ENCODE measurements at regions of chr1 and their contacts with region 1.

Region 1: GRCh38 chr1:161427733-161428516 is 60.2 kb upstream of the CFAP126 start:
- H3K4me3 ChIP-seq: peak overlapping the region; percentile 47
- H3K27ac ChIP-seq: no peak overlapping the region
- H3K4me1 ChIP-seq: no peaks in the 10 kb centered on the region
- CTCF ChIP-seq: no peak

Region 2: GRCh38 chr1:161192476-161193465 is 235.2 kb before region 1 on chr1:
- CTCF ChIA-PET with region 1: no interaction called
- POLR2A ChIA-PET with region 1: no interaction called
- H3K4me3 ChIP-seq: no peak overlapping the region
- H3K27ac ChIP-seq: no peak overlapping the region
- H3K4me1 ChIP-seq: no peaks in the 10 kb centered on the region
- CTCF ChIP-seq: peak; percentile 71

Region 3: GRCh38 chr1:161314201-161314981 is 113.5 kb before region 1 on chr1 and contains the start of gene SDHC:
- CTCF ChIA-PET with region 1: no interaction called
- POLR2A ChIA-PET with region 1: no interaction called
- H3K4me3 ChIP-seq: peak within 1 kb of the TSS; percentile 92
- H3K27ac ChIP-seq: peak within 1 kb of the TSS; percentile 69
- H3K4me1 ChIP-seq: 0 out of 2 replicates have a peak, but pooled peaks cover 4% of the 10 kb centered on the region
- CTCF ChIP-seq: peak; percentile 63

Region 4: GRCh38 chr1:161440312-161440894 is 12.5 kb after region 1 on chr1:
- CTCF ChIA-PET with region 1: interaction called, 20 read pairs
- POLR2A ChIA-PET with region 1: interaction called, 12 read pairs
- H3K4me3 ChIP-seq: peak overlapping the region; percentile 56
- H3K27ac ChIP-seq: peak overlapping the region; percentile 96
- H3K4me1 ChIP-seq: no peaks in the 10 kb centered on the region
- CTCF ChIP-seq: peak; percentile 89

Region 5: DNA sequence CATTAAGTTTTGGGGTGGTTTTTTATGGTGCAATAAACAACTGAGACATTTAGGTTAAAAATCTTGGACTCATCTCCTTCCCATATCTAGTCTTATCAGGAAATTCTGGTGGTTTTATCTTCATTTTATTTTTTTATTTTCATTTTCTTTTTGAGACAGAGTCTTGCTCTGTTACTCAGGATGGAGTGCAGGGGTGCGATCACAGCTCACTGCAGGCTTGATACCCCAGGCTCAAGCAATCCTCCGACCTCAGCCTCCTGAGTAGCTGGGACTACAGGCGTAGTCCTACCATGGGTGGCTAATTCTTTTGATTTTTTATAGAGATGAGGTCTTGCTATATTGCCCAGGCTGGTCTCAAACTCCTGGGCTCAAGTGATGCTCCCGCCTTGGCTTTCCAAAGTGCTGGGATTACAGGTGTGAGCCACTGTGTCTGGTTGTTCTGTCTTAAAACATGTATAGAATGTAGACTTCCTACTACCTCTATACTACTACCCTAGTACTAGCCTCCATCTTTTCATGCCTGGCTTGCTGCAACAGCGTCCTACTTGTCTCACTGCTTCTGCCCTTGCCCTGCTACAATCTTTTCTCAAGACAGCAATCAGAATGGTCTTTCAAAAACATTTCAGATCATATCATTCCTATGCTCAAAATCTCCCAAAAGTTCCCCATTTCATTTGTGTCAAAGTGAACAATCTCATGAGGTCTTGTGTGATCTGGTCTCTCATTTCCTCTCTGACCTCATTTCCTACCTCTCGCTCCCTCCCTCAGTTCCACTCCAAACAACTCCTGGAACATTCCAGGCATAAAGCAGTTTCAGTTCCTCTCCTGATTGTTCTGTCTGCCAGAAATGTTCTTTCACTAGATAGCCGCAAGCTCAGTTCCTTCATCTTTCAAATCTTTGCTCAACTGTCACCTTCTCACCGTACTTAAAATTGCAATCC is 71.4 kb after region 1 on chr1:
- CTCF ChIA-PET with region 1: no interaction called
- POLR2A ChIA-PET with region 1: no interaction called
- H3K4me3 ChIP-seq: no peak overlapping the region
- H3K27ac ChIP-seq: no peak overlapping the region
- H3K4me1 ChIP-seq: peaks cover 13% of the 10 kb centered on the region
- CTCF ChIP-seq: no peak